Naive thymus-derived CD4-positive, alpha-beta T cell (primary cell): ENCODE measurements at regions of chr4 and their contacts with region 1.

Region 1: DNA sequence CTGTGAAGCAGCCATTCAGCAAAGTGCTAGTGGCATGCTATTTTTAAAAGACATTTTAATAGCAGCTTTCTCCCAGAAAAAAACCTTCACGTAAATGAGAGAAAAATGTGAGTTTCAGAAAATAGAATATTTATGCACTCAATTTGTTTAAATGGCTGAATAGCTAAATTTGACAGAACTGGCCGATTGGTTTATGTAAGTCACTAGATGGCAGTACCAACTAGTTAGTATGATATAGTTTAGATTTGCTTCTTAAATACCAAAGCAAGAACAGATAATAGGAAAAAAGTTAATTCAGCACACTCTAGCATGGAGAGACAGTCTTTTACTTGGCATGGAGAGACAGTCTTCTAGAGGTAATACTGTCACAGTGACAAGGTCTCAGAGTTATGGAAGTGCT is 250.1 kb downstream of the SNCA start:
- DNase-seq: no peak
- ATAC-seq: no peak
- H3K4me3 ChIP-seq: no peak overlapping the region
- H3K4me3 Mint-ChIP-seq: no peak overlapping the region
- H3K27ac ChIP-seq: no peak overlapping the region
- H3K27ac Mint-ChIP-seq: no peak overlapping the region
- H3K4me1 ChIP-seq: no peaks in the 10 kb centered on the region
- H3K4me1 Mint-ChIP-seq: no peaks in the 10 kb centered on the region
- H3K27me3 ChIP-seq: no peaks in the 10 kb centered on the region
- H3K27me3 Mint-ChIP-seq: peaks cover 0 to 24% (median 9%) of the 10 kb centered on the region in 5 donors

Region 2: GRCh38 chr4:89619206-89619962 is 32.5 kb after region 1 on chr4:
- CTCF ChIA-PET with region 1: no interaction called
- POLR2A ChIA-PET with region 1: no interaction called
- intact Hi-C with region 1: no loop called
- DNase-seq: peak in 1 of 9 donors; percentile 18
- ATAC-seq: peak; percentile 40
- H3K4me3 ChIP-seq: peak overlapping the region; percentile 16
- H3K4me3 Mint-ChIP-seq: peak overlapping the region in 9 of 10 donors; percentile 26 to 80 (median 62)
- H3K27ac ChIP-seq: no peak overlapping the region
- H3K27ac Mint-ChIP-seq: peak overlapping the region in 8 of 9 donors; percentile 13 to 92 (median 70)
- H3K4me1 ChIP-seq: peaks cover 0 to 14% of the 10 kb centered on the region in 2 donors
- H3K4me1 Mint-ChIP-seq: peaks cover 4 to 46% (median 19%) of the 10 kb centered on the region in 7 donors
- H3K27me3 ChIP-seq: no peaks in the 10 kb centered on the region
- H3K27me3 Mint-ChIP-seq: peaks cover 0 to 3% (median 0%) of the 10 kb centered on the region in 5 donors

Region 3: DNA sequence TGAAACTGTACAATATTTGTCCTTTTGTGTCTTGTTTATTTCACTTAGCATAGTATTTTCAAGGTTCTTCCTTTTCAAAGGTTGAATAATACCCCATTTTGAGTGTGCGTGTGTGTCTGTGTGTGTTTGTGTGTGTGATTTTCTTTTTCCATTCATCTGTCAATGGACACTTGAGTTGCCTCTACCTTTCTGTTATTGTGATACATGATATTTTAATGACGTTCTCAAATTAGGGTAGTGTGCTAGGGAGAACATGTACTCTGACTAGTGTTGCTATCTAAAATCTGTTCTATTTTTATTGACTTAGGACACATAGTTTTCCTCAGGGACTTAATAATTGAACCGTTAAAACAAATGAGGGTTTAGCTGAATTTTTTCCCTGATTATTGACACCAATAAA is 317.7 kb after region 1 on chr4:
- CTCF ChIA-PET with region 1: no interaction called
- POLR2A ChIA-PET with region 1: no interaction called
- intact Hi-C with region 1: loop called (anchors 1 to 2 kb)
- DNase-seq: no peak
- ATAC-seq: no peak
- H3K4me3 ChIP-seq: no peak overlapping the region
- H3K4me3 Mint-ChIP-seq: no peak overlapping the region
- H3K27ac ChIP-seq: no peak overlapping the region
- H3K27ac Mint-ChIP-seq: no peak overlapping the region
- H3K4me1 ChIP-seq: no peaks in the 10 kb centered on the region
- H3K4me1 Mint-ChIP-seq: no peaks in the 10 kb centered on the region
- H3K27me3 ChIP-seq: no peaks in the 10 kb centered on the region
- H3K27me3 Mint-ChIP-seq: peaks cover 0 to 17% (median 0%) of the 10 kb centered on the region in 5 donors

Region 4: GRCh38 chr4:90137549-90137948 is 550.7 kb after region 1 on chr4:
- CTCF ChIA-PET with region 1: no interaction called
- POLR2A ChIA-PET with region 1: no interaction called
- intact Hi-C with region 1: no loop called
- DNase-seq: no peak
- ATAC-seq: no peak
- H3K4me3 ChIP-seq: no peak overlapping the region
- H3K4me3 Mint-ChIP-seq: no peak overlapping the region
- H3K27ac ChIP-seq: no peak overlapping the region
- H3K27ac Mint-ChIP-seq: no peak overlapping the region
- H3K4me1 ChIP-seq: no peaks in the 10 kb centered on the region
- H3K4me1 Mint-ChIP-seq: no peaks in the 10 kb centered on the region
- H3K27me3 ChIP-seq: no peaks in the 10 kb centered on the region
- H3K27me3 Mint-ChIP-seq: peaks cover 0 to 4% (median 0%) of the 10 kb centered on the region in 5 donors